Dorsolateral prefrontal cortex (tissue), 120 donors: ENCODE measurements at regions of chr22 and their contacts with region 1.

Region 1: GRCh38 chr22:35622191-35622913 is 5.2 kb upstream of the MB start:
- DNase-seq: peak in 1 of 10 donors; percentile 13
- H3K4me3 ChIP-seq: no peak overlapping the region
- H3K27ac ChIP-seq: peak overlapping the region in 1 of 59 donors; percentile 27
- H3K27me3 ChIP-seq: peaks cover 0 to 6% (median 0%) of the 10 kb centered on the region in 45 donors
- CTCF ChIP-seq: no peak

Region 2: GRCh38 chr22:35350539-35351503 is 271.5 kb before region 1 on chr22:
- intact Hi-C with region 1: loop called in 1 of 2 experiments (anchors 5 kb)
- DNase-seq: peak; percentile 67 to 94 (median 89)
- H3K4me3 ChIP-seq: peak overlapping the region; percentile 31 to 76 (median 61)
- H3K27ac ChIP-seq: peak overlapping the region in 55 of 59 donors; percentile 1 to 91 (median 64)
- H3K27me3 ChIP-seq: no peaks in the 10 kb centered on the region
- CTCF ChIP-seq: peak; percentile 82 to 97 (median 92)

Region 3: DNA sequence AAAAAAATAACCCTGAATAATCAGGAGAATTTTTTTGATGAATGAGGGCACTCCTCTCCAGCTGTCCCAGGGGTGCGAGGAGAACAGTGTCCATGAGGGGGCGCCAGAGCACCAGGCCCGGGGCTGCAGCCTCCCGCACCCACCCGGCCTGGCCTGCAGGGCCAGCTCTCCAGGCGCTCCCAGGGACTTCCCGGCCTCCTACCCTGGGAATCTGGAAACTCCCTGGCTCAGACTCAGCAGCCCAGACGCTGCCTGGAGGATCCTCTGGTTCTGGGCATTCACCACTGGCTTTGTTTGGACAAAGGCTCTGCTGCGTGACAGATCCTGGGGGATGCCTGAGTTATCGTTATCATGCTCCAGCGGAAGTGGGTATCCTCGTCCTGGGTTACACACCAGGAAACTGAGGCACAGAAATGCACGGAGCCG is 191.4 kb before region 1 on chr22:
- intact Hi-C with region 1: loop called in 1 of 2 experiments (anchors 5 kb)
- DNase-seq: peak; percentile 74 to 91 (median 82)
- H3K4me3 ChIP-seq: no peak overlapping the region
- H3K27ac ChIP-seq: peak overlapping the region in 21 of 59 donors; percentile 4 to 57 (median 33)
- H3K27me3 ChIP-seq: no peaks in the 10 kb centered on the region
- CTCF ChIP-seq: peak; percentile 80 to 98 (median 96)